Ovary (tissue), 10 donors: ENCODE measurements at regions of chr5 and their contacts with region 1.

Region 1: DNA sequence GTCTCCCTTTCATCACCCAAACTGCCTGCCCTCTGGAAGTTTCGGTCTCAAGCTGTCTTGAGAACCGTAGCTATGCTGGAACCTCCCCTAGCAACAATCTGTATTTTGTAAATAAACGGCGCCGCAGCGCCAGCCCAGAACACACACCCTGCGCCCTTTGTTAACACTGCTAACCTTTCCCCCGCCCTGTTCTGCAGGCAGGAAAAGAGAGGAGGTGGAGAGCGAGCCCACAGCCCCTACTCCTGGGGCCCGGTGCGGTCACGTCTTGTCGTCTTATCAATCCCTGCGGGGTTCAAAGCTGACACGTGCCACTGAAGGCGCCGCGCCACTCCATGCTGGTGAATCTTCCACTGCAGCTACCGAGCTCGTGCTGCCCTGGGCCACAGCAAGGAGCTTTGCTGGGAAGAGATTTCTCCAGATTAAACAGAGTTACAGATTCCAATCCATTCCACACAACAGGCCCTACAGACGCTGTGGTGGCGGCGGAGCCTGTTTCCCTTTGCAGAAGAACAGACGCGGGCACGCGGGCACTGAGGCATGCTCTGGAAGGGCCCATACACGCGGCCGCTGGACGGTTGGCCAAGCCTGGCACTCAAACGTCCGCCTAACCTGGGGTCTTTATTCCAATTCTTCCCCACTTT is 25.3 kb downstream of the ZDHHC11B start:
- DNase-seq: peak; percentile 9 to 68 (median 35)
- H3K4me3 ChIP-seq: no peak overlapping the region
- H3K27ac ChIP-seq: no peak overlapping the region
- H3K4me1 ChIP-seq: peaks cover 5% of the 10 kb centered on the region
- H3K27me3 ChIP-seq: no peaks in the 10 kb centered on the region
- CTCF ChIP-seq: no peak
- EP300 ChIP-seq: no peak
- POLR2A ChIP-seq: no peak

Region 2: GRCh38 chr5:849651-850301 is 90.5 kb after region 1 on chr5:
- intact Hi-C with region 1: loop called (anchors 1 to 5 kb)
- DNase-seq: peak in 3 of 5 donors; percentile 7 to 19 (median 12)
- H3K4me3 ChIP-seq: no peak overlapping the region
- H3K27ac ChIP-seq: no peak overlapping the region
- H3K4me1 ChIP-seq: no peaks in the 10 kb centered on the region
- H3K27me3 ChIP-seq: no peaks in the 10 kb centered on the region
- CTCF ChIP-seq: no peak
- EP300 ChIP-seq: no peak
- POLR2A ChIP-seq: no peak

Region 3: GRCh38 chr5:1134478-1134877 is 375.2 kb after region 1 on chr5:
- intact Hi-C with region 1: no loop called
- DNase-seq: no peak
- H3K4me3 ChIP-seq: no peak overlapping the region
- H3K27ac ChIP-seq: no peak overlapping the region
- H3K4me1 ChIP-seq: no peaks in the 10 kb centered on the region
- H3K27me3 ChIP-seq: no peaks in the 10 kb centered on the region
- CTCF ChIP-seq: no peak
- EP300 ChIP-seq: no peak
- POLR2A ChIP-seq: no peak

Region 4: GRCh38 chr5:1494780-1495524 is 735.7 kb after region 1 on chr5:
- intact Hi-C with region 1: no loop called
- DNase-seq: no peak
- H3K4me3 ChIP-seq: no peak overlapping the region
- H3K27ac ChIP-seq: no peak overlapping the region
- H3K4me1 ChIP-seq: no peaks in the 10 kb centered on the region
- H3K27me3 ChIP-seq: no peaks in the 10 kb centered on the region
- CTCF ChIP-seq: no peak
- EP300 ChIP-seq: no peak
- POLR2A ChIP-seq: no peak

Region 5: GRCh38 chr5:1523771-1524480 is 764.7 kb after region 1 on chr5 and contains the start of gene LPCAT1:
- intact Hi-C with region 1: no loop called
- DNase-seq: peak; percentile 67 to 86 (median 80)
- H3K4me3 ChIP-seq: peak within 1 kb of the TSS; percentile 68
- H3K27ac ChIP-seq: peak within 1 kb of the TSS; percentile 45 to 64
- H3K4me1 ChIP-seq: peaks cover 8% of the 10 kb centered on the region
- H3K27me3 ChIP-seq: no peaks in the 10 kb centered on the region
- CTCF ChIP-seq: peak in 1 of 3 donors; percentile 9
- EP300 ChIP-seq: no peak
- POLR2A ChIP-seq: no peak
- total RNA-seq, gene LPCAT1: 13.0 to 28.2 (median 25.3) TPM